CD4-positive, alpha-beta memory T cell (primary cell): ENCODE measurements at regions of chr14 and their contacts with region 1.

Region 1: DNA sequence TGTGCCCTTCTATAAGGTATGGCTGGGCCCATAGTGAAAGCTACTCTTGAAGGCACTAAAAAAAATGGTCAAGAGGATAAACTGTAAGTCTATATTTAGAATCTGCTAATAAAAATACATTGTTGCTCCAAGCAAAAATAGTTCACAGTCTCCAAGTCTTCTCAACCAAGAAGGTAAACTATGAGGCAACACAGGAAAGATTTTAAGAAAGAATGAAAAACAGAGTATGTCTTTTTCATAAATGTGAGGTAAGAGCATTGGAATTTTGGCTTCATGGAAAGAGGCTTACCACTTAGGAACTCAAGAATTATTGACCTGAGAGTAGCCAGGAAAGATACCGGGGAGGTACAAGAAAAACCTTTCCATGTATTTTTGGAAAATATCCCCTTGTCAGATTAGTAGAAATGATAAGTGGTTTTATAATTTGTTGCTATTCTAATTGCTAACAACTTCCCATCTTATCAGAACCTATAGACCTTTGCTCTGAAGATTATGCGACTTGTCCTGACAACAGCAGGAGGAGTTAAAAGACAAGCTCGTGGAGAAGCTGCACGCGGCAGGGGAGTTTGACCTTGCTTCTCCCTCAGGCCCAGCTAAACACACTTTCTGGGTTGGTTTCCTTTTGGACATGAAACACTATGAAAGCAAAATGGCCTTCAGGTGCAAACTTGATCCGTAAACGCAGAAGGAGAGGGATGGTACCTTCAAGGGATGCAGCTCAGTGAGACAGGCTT is 238.1 kb downstream of the FOXN3 start:
- DNase-seq: no peak
- H3K4me3 ChIP-seq: no peak overlapping the region
- H3K4me3 Mint-ChIP-seq: no peak overlapping the region
- H3K27ac ChIP-seq: no peak overlapping the region
- H3K27ac Mint-ChIP-seq: peak overlapping the region in 2 of 7 donors; percentile 25 to 38
- H3K4me1 ChIP-seq: peaks cover 5% of the 10 kb centered on the region
- H3K4me1 Mint-ChIP-seq: peaks cover 10 to 32% (median 23%) of the 10 kb centered on the region in 4 donors
- H3K27me3 ChIP-seq: no peaks in the 10 kb centered on the region
- H3K27me3 Mint-ChIP-seq: no peaks in the 10 kb centered on the region

Region 2: DNA sequence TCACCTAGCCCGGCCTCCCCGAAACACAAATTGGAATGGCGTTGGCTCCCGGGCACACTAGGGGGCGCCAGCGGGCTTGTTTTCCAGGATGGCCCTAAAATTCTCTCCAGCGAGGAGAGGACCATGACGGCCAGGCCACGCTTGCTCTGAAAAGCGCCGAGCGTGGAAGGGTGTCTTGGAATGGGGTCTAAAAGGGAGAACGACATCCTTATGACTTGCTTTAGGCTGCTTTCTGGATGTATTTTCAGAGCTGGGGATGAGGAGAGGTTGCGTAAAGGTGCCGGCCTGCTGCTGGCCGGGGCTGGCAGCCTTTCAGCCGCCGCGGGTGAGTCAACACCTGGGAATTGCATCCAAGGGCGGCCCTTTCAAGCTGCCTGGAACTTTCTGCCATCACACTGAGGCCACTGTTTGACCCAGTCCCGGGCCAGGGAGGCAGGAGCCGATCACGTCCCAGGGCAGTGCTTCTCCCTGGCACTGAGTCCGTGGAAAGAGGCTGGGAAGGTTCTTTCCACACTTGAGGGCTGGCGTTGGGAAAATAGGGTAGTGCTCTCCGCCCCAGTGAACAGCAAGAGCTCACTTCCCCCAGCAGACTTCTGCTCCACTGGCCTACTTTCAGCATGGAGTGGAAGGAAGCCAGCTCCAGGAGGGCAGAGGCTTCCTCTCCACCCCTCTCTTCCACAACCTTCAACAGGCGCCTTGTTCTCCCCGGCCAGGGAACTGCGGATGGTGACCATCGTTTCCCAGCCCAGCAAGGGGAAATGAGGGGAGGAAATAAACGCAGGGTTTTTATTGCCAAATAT is 138.3 kb before region 1 on chr14:
- CTCF ChIA-PET with region 1: interaction called, 6 read pairs
- POLR2A ChIA-PET with region 1: no interaction called
- intact Hi-C with region 1: loop called (anchors 1 kb)
- DNase-seq: peak; percentile 67 to 74 (median 68)
- H3K4me3 ChIP-seq: no peak overlapping the region
- H3K4me3 Mint-ChIP-seq: peak overlapping the region; percentile 53 to 85 (median 78)
- H3K27ac ChIP-seq: no peak overlapping the region
- H3K27ac Mint-ChIP-seq: no peak overlapping the region
- H3K4me1 ChIP-seq: peaks cover 11% of the 10 kb centered on the region
- H3K4me1 Mint-ChIP-seq: peaks cover 4 to 9% (median 7%) of the 10 kb centered on the region in 4 donors
- H3K27me3 ChIP-seq: peaks cover 5% of the 10 kb centered on the region
- H3K27me3 Mint-ChIP-seq: peaks cover 12 to 14% of the 10 kb centered on the region in 2 donors

Region 3: DNA sequence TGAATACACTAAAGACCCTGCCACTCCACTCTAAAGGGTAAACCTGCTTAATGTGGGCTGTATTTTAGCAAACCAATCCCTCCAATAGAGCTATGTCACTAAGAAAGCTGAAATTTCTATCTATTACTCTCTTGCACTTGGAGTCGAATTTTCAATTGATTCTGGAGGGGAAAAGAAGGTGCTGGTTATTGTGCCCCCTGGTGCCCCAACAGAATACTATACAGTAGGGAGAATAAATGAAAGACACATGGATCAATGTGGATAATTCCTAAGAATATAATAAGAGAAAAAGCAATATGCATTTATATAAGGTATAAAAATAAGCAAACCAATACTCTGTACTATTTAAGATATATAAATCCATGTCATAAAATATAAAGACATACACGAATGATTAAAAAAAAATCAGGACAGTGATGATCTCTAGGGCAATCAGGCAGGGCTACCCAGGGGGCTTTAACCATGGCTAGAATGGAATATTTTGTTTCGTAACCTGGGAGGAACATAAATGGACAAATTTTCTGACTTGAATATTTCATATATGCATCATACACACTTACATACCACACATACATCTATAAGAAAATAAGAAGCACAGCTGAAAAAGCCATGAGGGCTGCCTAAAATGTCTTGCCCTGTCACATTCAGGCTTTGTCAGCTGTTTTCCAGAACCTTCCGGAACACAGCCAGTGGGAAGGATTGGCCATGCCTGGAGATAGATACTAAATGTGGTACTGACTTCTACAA is 721.1 kb after region 1 on chr14:
- CTCF ChIA-PET with region 1: interaction called, 3 read pairs
- POLR2A ChIA-PET with region 1: no interaction called
- intact Hi-C with region 1: loop called (anchors 1 kb)
- DNase-seq: peak in 3 of 5 donors; percentile 7 to 16 (median 15)
- H3K4me3 ChIP-seq: no peak overlapping the region
- H3K4me3 Mint-ChIP-seq: no peak overlapping the region
- H3K27ac ChIP-seq: no peak overlapping the region
- H3K27ac Mint-ChIP-seq: no peak overlapping the region
- H3K4me1 ChIP-seq: peaks cover 22% of the 10 kb centered on the region
- H3K4me1 Mint-ChIP-seq: peaks cover 15 to 31% (median 21%) of the 10 kb centered on the region in 4 donors
- H3K27me3 ChIP-seq: no peaks in the 10 kb centered on the region
- H3K27me3 Mint-ChIP-seq: no peaks in the 10 kb centered on the region